A673 (cell line): ENCODE measurements at regions of chr11 and their contacts with region 1.

Region 1: DNA sequence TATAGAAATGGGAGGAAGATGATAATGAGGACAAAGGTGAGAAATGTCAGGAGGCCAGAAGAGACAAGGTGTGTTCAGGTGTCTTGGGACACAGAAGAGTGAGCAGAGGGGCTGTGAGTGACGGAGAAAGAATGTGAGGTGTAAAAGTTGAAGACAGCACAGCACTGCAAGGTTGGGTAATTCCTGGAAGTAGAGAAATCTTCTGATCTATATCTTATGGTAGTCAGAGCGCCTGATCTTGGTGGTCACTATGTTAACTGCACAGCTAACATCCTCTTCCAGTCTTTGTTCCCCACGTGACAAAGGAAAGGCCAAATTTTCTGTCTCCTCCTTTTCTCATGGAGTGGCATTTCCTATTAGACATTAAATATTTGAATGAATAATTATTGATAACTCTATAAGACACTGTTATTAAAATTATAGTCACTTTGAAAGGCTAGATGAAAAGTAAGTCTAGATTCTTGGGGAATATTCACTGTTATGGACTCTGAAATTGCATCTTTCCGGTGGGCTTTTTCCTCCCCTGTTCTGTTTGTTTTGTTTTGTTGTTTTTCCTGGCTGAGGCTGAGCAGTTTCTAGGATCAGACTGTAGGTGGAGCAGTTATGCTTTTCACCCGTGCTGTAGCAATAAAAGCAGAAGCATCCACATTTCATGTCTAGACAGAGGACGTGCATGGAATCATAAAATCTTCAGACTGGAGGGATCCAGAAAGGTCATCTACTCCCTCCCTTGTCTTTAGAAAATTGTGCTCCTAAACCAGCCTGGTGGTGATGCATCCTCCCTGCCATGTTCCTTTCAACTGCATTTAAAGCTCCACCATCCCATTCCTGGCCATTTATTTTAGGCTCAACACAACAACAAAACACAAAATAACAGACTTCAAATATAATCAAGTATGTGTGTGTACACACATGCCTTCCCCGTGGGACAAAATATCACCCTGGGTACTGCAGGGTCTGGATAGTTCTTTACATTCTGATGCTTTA is 26.6 kb downstream of the SC5D start:
- DNase-seq: peak; percentile 71
- H3K4me3 ChIP-seq: no peak overlapping the region
- H3K27ac ChIP-seq: no peak overlapping the region
- H3K4me1 ChIP-seq: no peaks in the 10 kb centered on the region
- H3K27me3 ChIP-seq: no peaks in the 10 kb centered on the region
- CTCF ChIP-seq: peak; percentile 86

Region 2: DNA sequence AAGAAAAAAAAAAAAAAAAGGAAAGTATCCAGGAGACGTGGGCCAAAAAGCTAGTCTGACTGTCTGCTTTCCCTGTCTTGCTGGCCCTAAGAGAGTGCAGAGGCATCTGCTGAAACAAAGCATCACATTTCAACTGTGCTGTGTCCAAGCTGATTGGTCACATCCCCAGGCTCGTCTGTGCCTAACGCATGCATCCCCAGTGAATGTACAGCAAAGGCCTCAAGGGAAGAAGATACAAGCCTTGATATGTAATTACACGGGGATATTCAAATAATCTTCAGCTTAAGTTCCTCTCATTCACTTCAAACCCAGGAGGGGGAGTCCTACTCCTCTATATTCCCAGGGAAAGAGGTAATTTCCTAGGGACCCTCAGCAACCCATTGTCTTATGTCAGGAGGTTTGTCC is 127.6 kb after region 1 on chr11:
- CTCF ChIA-PET with region 1: no interaction called
- POLR2A ChIA-PET with region 1: no interaction called
- intact Hi-C with region 1: no loop called
- DNase-seq: peak; percentile 65
- H3K4me3 ChIP-seq: no peak overlapping the region
- H3K27ac ChIP-seq: no peak overlapping the region
- H3K4me1 ChIP-seq: no peaks in the 10 kb centered on the region
- H3K27me3 ChIP-seq: peaks cover 14% of the 10 kb centered on the region
- CTCF ChIP-seq: peak; percentile 49

Region 3: GRCh38 chr11:121534131-121535093 is 215.3 kb after region 1 on chr11:
- CTCF ChIA-PET with region 1: no interaction called
- POLR2A ChIA-PET with region 1: no interaction called
- intact Hi-C with region 1: loop called (anchors 1 kb)
- DNase-seq: peak; percentile 52
- H3K4me3 ChIP-seq: no peak overlapping the region
- H3K27ac ChIP-seq: no peak overlapping the region
- H3K4me1 ChIP-seq: no peaks in the 10 kb centered on the region
- H3K27me3 ChIP-seq: peaks cover 30% of the 10 kb centered on the region
- CTCF ChIP-seq: peak; percentile 69

Region 4: DNA sequence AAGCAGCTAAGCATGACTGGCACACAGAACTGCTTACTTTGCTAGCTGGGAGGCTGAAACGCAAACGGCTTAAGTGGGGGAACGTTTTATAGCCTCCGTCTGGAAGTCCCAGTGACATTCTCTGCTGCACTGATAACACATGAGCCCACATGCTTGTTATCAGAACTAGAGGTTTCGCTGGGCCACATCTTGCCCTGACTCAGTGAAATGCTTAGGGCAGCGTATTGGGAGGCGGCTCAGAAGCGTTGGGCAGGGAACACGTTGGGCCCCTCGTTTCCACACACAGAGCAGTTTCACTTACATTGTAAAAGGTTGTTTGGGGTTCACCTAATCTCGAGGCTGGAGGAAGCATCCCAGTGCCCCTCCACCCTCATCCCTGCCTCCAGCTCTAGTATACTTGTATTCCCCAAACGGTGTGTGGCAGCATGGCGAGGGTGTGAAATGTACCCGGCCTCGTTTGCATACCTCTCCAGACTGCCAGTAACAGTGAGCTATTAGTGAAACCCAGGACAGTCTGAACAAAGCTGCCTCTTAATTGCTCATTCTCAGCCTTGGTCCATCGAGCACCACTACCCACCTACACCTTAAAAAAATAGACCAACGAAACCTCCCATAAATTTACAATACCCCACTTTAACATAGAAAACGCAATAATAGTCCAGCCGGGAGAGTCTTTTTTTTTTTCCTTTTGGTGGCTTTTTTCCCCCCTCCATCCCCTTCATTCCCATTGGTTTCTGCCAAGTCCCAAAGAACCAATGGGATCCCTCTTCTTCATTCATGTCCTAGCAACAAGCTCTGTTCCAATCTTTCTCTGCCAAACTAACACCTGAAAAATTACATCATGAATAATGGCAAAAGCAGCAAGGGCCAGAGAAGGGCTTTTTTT is 352.4 kb after region 1 on chr11:
- CTCF ChIA-PET with region 1: no interaction called
- POLR2A ChIA-PET with region 1: no interaction called
- intact Hi-C with region 1: no loop called
- DNase-seq: no peak
- H3K4me3 ChIP-seq: no peak overlapping the region
- H3K27ac ChIP-seq: no peak overlapping the region
- H3K4me1 ChIP-seq: peaks cover 29% of the 10 kb centered on the region
- H3K27me3 ChIP-seq: no peaks in the 10 kb centered on the region
- CTCF ChIP-seq: no peak